Gastrocnemius medialis (tissue), 4 donors: ENCODE measurements at regions of chr9 and their contacts with region 1.

Region 1: DNA sequence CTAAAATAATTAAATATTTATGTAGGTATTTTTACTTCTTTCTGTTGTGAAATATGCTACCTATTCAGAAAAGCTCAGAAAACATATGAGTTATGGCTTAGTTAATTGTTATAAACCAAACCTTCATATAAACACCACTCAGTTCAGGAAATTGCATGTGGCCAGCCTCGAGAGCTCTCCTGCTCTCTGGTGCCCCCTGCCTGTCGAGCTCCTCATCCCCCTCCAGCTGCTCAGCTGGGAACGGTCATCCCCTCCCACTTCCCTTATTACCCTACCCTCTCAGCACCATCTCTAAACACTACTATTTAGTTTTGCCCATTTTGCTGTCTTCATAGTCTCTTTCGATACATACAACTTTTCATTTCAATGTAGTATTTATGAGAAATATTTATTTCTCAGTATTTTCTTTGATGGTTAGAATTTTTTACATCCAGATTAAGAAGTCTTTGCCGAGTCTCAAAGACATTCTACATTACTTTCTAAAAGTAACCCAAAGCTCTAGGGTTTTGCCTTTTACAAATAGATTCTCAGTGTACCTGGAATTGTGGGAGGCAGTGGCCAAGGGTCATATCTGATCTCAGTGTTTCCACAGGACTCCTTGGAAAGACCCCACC is 51.2 kb upstream of the SEMA4D start:
- DNase-seq: peak; percentile 49 to 72
- ATAC-seq: peak; percentile 92 to 98
- H3K4me3 ChIP-seq: no peak overlapping the region
- H3K27ac ChIP-seq: no peak overlapping the region
- H3K4me1 ChIP-seq: no peaks in the 10 kb centered on the region
- H3K27me3 ChIP-seq: no peaks in the 10 kb centered on the region
- CTCF ChIP-seq: peak; percentile 75 to 94 (median 86)
- POLR2A ChIP-seq: no peak

Region 2: GRCh38 chr9:89323390-89323789 is 225.7 kb before region 1 on chr9:
- in situ Hi-C with region 1: loop called in 1 of 4 experiments (anchors 5 kb)
- intact Hi-C with region 1: loop called (anchors 1 kb)
- DNase-seq: no peak
- ATAC-seq: no peak
- H3K4me3 ChIP-seq: no peak overlapping the region
- H3K27ac ChIP-seq: peak overlapping the region in 2 of 4 donors; percentile 20 to 43
- H3K4me1 ChIP-seq: peaks cover 46 to 48% of the 10 kb centered on the region in 2 donors
- H3K27me3 ChIP-seq: no peaks in the 10 kb centered on the region
- CTCF ChIP-seq: no peak
- POLR2A ChIP-seq: no peak

Region 3: GRCh38 chr9:89410641-89411350 is 138.3 kb before region 1 on chr9:
- in situ Hi-C with region 1: loop called in 1 of 4 experiments (anchors 25 kb)
- intact Hi-C with region 1: loop called (anchors 5 kb)
- DNase-seq: no peak
- ATAC-seq: no peak
- H3K4me3 ChIP-seq: no peak overlapping the region
- H3K27ac ChIP-seq: peak overlapping the region in 1 of 4 donors; percentile 68
- H3K4me1 ChIP-seq: peaks cover 49 to 67% of the 10 kb centered on the region in 2 donors
- H3K27me3 ChIP-seq: no peaks in the 10 kb centered on the region
- CTCF ChIP-seq: no peak
- POLR2A ChIP-seq: no peak

Region 4: DNA sequence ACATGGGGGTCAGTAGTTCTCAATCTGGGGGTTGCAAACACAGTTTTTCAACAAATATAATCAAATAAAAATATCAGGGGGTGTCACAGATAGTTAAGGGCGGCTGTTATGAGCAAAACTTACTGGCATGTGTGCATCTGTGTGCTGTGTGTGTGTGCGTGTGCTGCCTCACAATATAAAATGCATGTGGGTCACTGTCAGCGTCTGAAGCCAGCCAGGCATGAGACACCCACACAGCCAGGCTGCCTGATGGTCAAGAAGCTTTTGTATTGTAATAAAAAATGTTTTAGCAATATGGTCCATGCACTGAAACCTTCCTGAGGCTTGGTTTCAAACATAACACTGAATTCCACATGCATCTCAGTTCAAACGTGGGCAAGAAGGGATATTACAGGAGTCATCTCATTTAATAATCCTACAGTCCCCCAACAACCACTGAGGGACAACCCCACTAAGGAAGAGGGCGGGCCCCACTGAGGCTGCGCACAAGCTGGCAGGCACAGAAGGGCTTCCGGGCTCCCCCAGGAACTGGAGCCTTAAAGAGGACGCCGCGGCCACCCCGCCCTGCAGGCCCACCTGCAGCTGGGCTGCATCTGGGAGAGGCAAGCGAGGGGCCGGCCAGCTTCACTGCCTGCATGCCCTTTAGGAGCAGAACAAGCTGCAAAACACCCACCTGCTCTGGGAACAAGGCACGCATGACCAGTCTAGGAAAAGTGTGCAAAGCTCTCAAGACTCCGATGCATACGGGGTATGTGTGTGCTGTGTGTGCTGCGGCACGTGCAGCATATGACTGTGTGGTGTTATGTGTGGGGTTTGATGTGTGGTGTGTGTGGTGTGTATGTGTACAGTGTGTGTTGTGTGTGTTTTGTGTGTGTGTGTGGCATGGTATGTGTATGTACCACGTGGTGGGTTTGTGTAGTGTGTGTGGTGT is 65.3 kb before region 1 on chr9:
- in situ Hi-C with region 1: loop called in 1 of 4 experiments (anchors 10 kb)
- intact Hi-C with region 1: no loop called
- DNase-seq: peak in 1 of 2 donors; percentile 43
- ATAC-seq: peak; percentile 8 to 11
- H3K4me3 ChIP-seq: peak overlapping the region; percentile 5 to 38 (median 33)
- H3K27ac ChIP-seq: peak overlapping the region; percentile 89 to 95 (median 92)
- H3K4me1 ChIP-seq: peaks cover 65 to 71% of the 10 kb centered on the region in 2 donors
- H3K27me3 ChIP-seq: no peaks in the 10 kb centered on the region
- CTCF ChIP-seq: no peak
- POLR2A ChIP-seq: no peak

Region 5: DNA sequence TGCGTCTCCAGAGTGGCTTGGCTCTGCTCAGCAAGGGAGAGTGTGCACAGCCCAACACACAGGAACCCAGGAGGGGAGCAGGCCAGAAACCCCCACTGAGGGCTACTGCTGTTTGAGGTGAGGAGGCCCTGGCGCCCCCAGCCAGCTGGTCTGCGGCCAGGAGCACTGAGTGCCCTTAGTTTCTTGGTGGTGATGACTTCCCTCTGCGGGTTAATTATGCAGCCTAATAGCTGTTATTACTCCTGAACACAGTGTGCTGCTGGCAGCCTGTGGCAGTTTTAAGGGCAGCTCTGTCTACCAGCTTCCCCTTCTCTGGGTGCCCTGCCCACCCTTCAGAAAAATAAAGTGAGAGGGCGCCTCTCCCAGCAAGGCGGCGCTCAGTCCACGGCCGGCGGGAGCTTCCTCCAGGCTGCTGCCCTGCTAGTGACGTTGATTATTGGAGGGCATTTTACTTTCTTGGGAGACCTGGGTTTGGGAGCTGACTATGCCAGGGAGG is 74.8 kb after region 1 on chr9:
- in situ Hi-C with region 1: no loop called
- intact Hi-C with region 1: no loop called
- DNase-seq: peak; percentile 41 to 72
- ATAC-seq: peak; percentile 21 to 40
- H3K4me3 ChIP-seq: peak overlapping the region in 3 of 4 donors; percentile 12 to 32 (median 28)
- H3K27ac ChIP-seq: peak overlapping the region; percentile 88 to 94 (median 90)
- H3K4me1 ChIP-seq: peaks cover 55 to 59% of the 10 kb centered on the region in 2 donors
- H3K27me3 ChIP-seq: no peaks in the 10 kb centered on the region
- CTCF ChIP-seq: peak in 2 of 5 experiments; percentile 39 to 49
- POLR2A ChIP-seq: no peak

Region 6: GRCh38 chr9:89742660-89743572 is 193.8 kb after region 1 on chr9:
- in situ Hi-C with region 1: no loop called
- intact Hi-C with region 1: no loop called
- DNase-seq: no peak
- ATAC-seq: no peak
- H3K4me3 ChIP-seq: no peak overlapping the region
- H3K27ac ChIP-seq: no peak overlapping the region
- H3K4me1 ChIP-seq: peaks cover 13 to 21% of the 10 kb centered on the region in 2 donors
- H3K27me3 ChIP-seq: no peaks in the 10 kb centered on the region
- CTCF ChIP-seq: no peak
- POLR2A ChIP-seq: no peak